Cardiac septum (tissue), 1 donor: ENCODE measurements at regions of chr2 and their contacts with region 1.

Region 1: GRCh38 chr2:179272406-179273192 is 8.0 kb upstream of the SESTD1 start:
- DNase-seq: no peak

Region 2: GRCh38 chr2:179340668-179341067 is 68.1 kb after region 1 on chr2:
- intact Hi-C with region 1: loop called (anchors 5 kb)
- DNase-seq: no peak

Region 3: DNA sequence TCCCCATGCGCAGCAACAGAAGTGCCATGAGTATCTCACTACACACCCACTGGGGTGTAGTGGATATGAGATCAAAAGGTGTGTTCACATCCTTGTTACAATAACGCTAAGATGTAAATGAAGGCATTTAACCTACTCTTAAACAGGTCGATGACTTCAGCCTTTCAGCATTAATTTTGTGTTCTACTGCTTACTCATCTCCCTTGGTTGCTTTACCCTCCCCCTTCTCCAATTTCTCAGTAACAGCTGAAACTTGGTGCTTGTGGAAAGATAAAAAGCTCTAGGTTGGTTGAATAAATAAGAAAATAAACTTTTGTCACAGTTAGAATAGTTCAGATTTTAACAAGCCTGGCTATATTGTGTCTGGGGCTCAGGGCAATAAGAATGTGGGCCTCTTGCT is 139.5 kb after region 1 on chr2:
- intact Hi-C with region 1: no loop called
- DNase-seq: no peak